IMR-90 (cell line): ENCODE measurements at regions of chr5 and their contacts with region 1.

Region 1: GRCh38 chr5:73312146-73312871 is 136.3 kb downstream of the FOXD1 start:
- DNase-seq: peak; percentile 96
- ATAC-seq: peak; percentile 63
- H3K4me3 ChIP-seq: no peak overlapping the region
- H3K27ac ChIP-seq: peak overlapping the region; percentile 74
- H3K4me1 ChIP-seq: peaks cover 14% of the 10 kb centered on the region
- H3K27me3 ChIP-seq: no peaks in the 10 kb centered on the region; the same call in 1 of the 2 replicates
- CTCF ChIP-seq: peak; percentile 75
- POLR2A ChIP-seq: no peak; the same call in 1 of the 2 replicates
- RAD21 ChIP-seq: peak; percentile 78

Region 2: GRCh38 chr5:72955768-72956323 is 356.5 kb before region 1 on chr5 and contains the start of gene FCHO2:
- CTCF ChIA-PET with region 1: no interaction called
- POLR2A ChIA-PET with region 1: no interaction called
- dilution Hi-C with region 1: no loop called
- in situ Hi-C with region 1: no loop called
- intact Hi-C with region 1: loop called (anchors 5 kb)
- DNase-seq: peak; percentile 95
- ATAC-seq: peak; percentile 84
- H3K4me3 ChIP-seq: peak within 1 kb of the TSS; percentile 81
- H3K27ac ChIP-seq: peak within 1 kb of the TSS; percentile 96
- H3K4me1 ChIP-seq: peaks cover 13% of the 10 kb centered on the region
- H3K27me3 ChIP-seq: no peaks in the 10 kb centered on the region
- CTCF ChIP-seq: peak; percentile 81
- POLR2A ChIP-seq: peak; percentile 74
- RAD21 ChIP-seq: peak; percentile 61
- total RNA-seq, gene FCHO2: 13.1 and 23.5 TPM in 2 replicates

Region 3: DNA sequence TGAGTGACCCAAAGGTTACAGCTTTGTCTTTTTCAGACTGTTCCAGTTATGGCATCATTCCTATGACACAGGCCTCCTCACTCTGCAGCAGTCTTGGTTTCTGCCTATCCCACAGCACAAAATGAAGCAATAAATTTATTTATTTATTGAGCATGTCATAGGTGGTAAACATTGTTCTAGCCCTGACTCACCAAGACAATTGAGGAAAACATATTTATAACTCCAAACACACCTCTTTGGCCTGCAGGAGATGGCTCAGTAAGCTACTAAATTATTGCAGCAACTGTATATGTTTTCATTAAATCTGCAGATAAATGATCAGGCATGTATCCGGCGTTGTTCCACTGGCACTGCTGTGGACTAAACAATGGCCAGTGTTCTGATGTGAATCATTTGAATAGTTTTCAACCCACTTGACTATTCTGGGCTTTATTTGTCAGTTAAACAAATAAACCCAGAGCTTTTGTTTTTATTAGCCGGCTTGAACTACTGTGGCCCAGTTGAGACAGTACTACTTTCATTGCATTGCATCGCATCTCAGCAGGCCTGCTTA is 53.1 kb after region 1 on chr5:
- CTCF ChIA-PET with region 1: interaction called, 4 read pairs
- POLR2A ChIA-PET with region 1: no interaction called
- dilution Hi-C with region 1: no loop called
- in situ Hi-C with region 1: no loop called
- intact Hi-C with region 1: loop called (anchors 2 kb)
- DNase-seq: peak; percentile 96
- ATAC-seq: peak; percentile 83
- H3K4me3 ChIP-seq: no peak overlapping the region
- H3K27ac ChIP-seq: no peak overlapping the region
- H3K4me1 ChIP-seq: peaks cover 21% of the 10 kb centered on the region
- H3K27me3 ChIP-seq: no peaks in the 10 kb centered on the region
- CTCF ChIP-seq: no peak
- POLR2A ChIP-seq: no peak
- RAD21 ChIP-seq: no peak; the same call in 1 of the 2 replicates